ENCODE measurements at regions of chr7 and their contacts with region 1.

Region 1: GRCh38 chr7:128209229-128210035 is 31.6 kb upstream of the LEP start:
- DNase-seq: peak; percentile 13
- ATAC-seq: peak; percentile 85
- H3K4me3 ChIP-seq: no peak overlapping the region
- H3K27ac ChIP-seq: no peak overlapping the region
- H3K4me1 ChIP-seq: no peaks in the 10 kb centered on the region
- H3K27me3 ChIP-seq: no peaks in the 10 kb centered on the region; a peak in 3 of 4 replicates
- CTCF ChIP-seq: peak; percentile 97 to 99 (median 99); a peak in 5 of 6 replicates
- EP300 ChIP-seq: no peak
- POLR2A ChIP-seq: no peak
- RAD21 ChIP-seq: peak; percentile 99

Region 2: DNA sequence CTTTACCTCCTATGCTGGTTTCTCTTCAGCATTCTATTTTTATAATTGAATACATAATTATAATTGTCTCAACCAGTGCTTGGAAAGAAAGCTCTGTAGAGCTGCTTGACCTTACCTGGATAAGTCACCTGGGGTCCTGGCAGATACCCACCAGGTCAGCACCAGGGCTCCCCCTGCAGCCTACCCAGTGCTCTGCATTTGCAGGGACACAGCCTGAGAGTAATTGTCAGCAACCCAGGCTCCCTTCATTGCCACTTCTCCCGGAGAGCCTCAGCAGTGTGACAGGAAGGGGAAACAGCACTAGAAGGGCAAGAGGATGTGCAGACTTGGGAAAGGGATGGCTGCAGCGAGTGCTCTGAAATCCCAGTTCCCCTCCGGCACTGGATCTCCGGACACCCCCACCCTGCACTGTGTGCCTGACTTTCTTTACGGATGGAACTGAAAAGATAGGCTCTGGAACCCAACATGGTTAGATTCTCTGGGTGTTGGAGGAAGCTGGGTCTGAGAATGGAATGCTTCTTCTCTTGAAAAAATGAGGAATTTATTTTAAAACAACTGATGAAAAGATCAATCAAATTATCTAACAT is 580.1 kb before region 1 on chr7:
- CTCF ChIA-PET with region 1: interaction called, 14 read pairs
- POLR2A ChIA-PET with region 1: no interaction called
- RAD21 ChIA-PET with region 1: interaction called, 5 read pairs
- SMC1A ChIA-PET with region 1: interaction called, 3 read pairs
- in situ Hi-C with region 1: no loop called
- intact Hi-C with region 1: no loop called
- DNase-seq: no peak
- ATAC-seq: peak; percentile 96
- H3K4me3 ChIP-seq: no peak overlapping the region
- H3K27ac ChIP-seq: no peak overlapping the region
- H3K4me1 ChIP-seq: no peaks in the 10 kb centered on the region
- H3K27me3 ChIP-seq: no peaks in the 10 kb centered on the region
- CTCF ChIP-seq: peak; percentile 57 to 67 (median 62)
- EP300 ChIP-seq: no peak
- POLR2A ChIP-seq: no peak
- RAD21 ChIP-seq: peak; percentile 39; the same call in 1 of the 2 replicates

Region 3: DNA sequence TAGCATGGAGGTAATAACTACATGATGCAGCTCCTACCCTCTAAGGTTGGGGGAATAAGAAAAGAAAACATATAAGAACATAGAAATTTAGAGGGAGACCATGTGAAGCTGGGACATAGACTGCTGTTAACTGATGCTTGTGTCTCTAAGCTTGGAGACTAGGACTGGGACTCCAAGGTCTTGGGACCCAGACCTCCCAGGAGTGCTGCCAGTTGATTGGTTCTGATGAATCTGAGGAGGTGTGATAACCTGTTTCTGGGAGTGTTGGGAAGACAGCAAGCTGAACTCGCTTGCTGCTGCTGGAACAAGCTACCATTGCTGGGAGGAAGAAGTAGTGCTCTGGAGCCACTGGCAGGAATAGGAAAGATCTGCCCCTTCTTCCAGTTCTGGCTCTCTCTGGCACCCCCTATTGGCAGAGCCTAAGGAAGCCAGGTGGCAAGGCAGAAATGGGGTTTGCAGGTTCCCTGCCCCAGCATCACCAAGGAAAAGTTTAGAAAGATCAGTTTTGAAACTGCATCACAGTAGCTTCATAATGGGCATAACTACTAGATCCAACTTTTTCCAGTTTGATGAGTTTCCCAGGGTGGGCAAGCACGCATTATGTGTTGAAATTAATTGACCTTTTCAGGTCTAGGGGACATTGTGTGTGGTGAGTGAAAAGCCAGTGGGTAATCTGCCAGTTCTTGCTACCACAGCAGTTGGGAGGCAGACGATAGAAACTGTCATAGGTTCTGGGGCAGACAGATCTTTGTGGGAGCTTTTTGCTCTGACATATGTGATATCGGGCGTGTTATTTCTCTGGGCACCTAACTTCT is 416.7 kb before region 1 on chr7:
- CTCF ChIA-PET with region 1: interaction called, 10 read pairs
- POLR2A ChIA-PET with region 1: no interaction called
- RAD21 ChIA-PET with region 1: interaction called, 3 read pairs
- SMC1A ChIA-PET with region 1: interaction called, 5 read pairs
- in situ Hi-C with region 1: no loop called
- intact Hi-C with region 1: no loop called
- DNase-seq: no peak
- ATAC-seq: peak; percentile 89
- H3K4me3 ChIP-seq: no peak overlapping the region
- H3K27ac ChIP-seq: no peak overlapping the region
- H3K4me1 ChIP-seq: peaks cover 5% of the 10 kb centered on the region; the same call in 1 of the 2 replicates
- H3K27me3 ChIP-seq: no peaks in the 10 kb centered on the region
- CTCF ChIP-seq: peak; percentile 49 to 89 (median 63)
- EP300 ChIP-seq: no peak
- POLR2A ChIP-seq: no peak
- RAD21 ChIP-seq: peak; percentile 38

Region 4: GRCh38 chr7:128108641-128109423 is 100.6 kb before region 1 on chr7:
- CTCF ChIA-PET with region 1: interaction called, 10 read pairs
- POLR2A ChIA-PET with region 1: no interaction called
- RAD21 ChIA-PET with region 1: interaction called, 6 read pairs
- SMC1A ChIA-PET with region 1: no interaction called
- in situ Hi-C with region 1: no loop called
- intact Hi-C with region 1: no loop called
- DNase-seq: peak; percentile 78
- ATAC-seq: peak; percentile 82
- H3K4me3 ChIP-seq: peak overlapping the region; percentile 16; the same call in 1 of the 2 replicates
- H3K27ac ChIP-seq: peak overlapping the region; percentile 73
- H3K4me1 ChIP-seq: peaks cover 30% of the 10 kb centered on the region
- H3K27me3 ChIP-seq: no peaks in the 10 kb centered on the region
- CTCF ChIP-seq: no peak
- EP300 ChIP-seq: peak; percentile 57 to 73; a peak in 2 of 4 replicates
- POLR2A ChIP-seq: no peak
- RAD21 ChIP-seq: no peak

Measured in GM12878 (cell line).